Brain microvascular endothelial cell (primary cell): ENCODE measurements at regions of chr16 and their contacts with region 1.

Region 1: DNA sequence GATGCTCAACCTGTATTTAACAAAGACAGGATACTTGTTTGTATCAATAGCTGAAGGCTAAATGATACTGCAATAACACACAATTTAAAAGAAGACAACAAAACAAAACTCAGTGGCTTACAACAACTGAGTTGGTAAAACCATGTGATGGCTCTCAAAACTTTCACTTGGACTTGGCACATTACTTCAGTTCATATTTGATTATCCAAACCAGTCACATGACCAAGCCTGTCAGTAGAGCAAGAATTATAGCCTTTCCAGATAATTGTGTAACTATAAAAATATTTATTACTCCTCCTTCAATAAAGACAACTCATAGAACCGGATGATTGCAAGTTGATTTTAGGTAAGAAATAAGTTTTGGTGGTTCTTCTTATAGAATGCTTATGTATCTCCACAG is 56.8 kb downstream of the NQO1 start:
- DNase-seq: no peak
- H3K4me3 ChIP-seq: no peak overlapping the region
- H3K27ac ChIP-seq: no peak overlapping the region
- H3K27me3 ChIP-seq: no peaks in the 10 kb centered on the region
- CTCF ChIP-seq: no peak

Region 2: DNA sequence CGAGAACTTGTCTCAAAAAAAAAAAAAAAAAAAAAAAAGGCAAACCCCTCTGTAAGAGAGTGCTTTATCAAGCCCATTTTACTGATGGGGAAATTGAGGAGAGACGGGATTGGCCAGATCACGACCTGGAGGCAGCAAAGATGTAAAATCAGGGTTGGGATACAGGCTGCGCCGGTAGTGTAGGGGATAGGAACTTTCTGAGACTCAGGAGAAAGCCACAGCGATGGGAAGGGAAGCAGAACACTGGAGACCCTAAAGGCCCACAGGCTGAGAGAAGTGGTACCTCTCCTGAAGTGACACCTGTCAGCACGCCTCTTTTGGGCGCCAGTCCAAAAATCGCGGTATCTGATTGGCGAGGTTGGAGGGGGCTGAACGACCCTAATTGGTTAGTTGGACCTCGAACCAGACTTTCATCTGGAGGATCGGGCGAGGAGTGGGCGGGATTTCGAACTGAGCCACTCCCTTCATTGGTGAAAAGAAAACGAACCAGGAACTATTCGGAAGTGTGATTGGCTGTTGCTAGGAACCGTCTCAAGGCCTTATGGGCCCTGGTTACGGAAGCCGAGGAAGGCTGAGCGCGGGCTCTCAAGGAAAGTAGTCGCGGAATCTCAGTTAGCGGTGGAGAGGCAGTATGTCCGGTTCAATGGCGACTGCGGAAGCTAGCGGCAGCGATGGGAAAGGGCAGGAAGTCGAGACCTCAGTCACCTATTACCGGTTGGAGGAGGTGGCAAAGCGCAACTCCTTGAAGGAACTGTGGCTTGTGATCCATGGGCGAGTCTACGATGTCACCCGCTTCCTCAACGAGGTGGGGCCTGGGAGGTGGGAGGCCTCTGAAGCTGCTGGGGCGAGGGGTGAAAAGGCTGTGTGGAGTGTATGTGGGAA is 245.3 kb before region 1 on chr16 and contains the start of gene CYB5B:
- in situ Hi-C with region 1: loop called (anchors 25 kb)
- DNase-seq: peak; percentile 99
- H3K4me3 ChIP-seq: peak within 1 kb of the TSS; percentile 85
- H3K27ac ChIP-seq: peak within 1 kb of the TSS; percentile 58
- H3K27me3 ChIP-seq: no peaks in the 10 kb centered on the region
- CTCF ChIP-seq: peak; percentile 12